CD4-positive, alpha-beta memory T cell (primary cell): ENCODE measurements at regions of chr2 and their contacts with region 1.

Region 1: DNA sequence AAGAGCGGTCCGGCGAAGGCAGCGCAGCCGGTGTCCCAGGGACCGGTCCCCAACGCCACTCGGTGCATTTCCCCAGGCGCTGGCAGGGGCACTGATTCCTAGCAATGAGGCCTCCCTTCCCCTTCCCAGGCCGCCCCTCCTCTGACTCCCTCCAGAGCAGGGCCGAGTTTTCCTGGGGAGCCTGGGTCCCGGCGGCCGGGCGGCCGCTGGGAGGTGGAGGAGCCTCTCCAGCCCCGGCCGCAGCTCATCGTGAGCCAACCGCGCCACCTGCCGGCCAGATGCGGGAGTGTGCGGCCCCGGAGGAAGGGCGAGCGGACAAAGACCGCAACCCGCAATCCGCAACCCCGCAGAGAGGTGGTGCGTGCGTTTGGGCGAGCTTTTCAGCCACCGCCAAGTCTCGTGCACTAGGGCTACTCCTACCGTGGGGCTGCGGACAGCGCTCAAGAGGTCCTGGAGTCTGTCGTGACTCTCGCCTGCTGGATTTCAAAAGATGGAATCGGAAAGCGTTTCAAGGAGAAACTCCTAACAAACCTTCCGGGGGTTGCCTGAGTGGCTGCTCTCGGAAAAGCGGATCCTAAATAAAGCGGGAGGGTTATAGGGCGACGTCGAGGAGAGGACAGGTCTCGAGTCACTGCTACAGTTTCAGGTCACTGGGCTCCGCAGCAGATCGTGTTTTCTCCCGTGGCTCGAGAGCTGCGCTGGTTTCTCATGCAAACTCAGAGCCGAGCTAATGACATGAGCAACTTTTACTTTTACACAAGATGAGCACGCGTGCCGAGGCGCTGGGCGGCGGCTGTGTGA is 1.5 kb upstream of the EPHA4 start:
- DNase-seq: peak; percentile 73 to 84 (median 74)
- H3K4me3 ChIP-seq: peak overlapping the region; percentile 69 to 90
- H3K4me3 Mint-ChIP-seq: peak overlapping the region; percentile 77 to 93 (median 86)
- H3K27ac ChIP-seq: peak overlapping the region; percentile 79
- H3K27ac Mint-ChIP-seq: peak overlapping the region in 6 of 7 donors; percentile 24 to 93 (median 74)
- H3K4me1 ChIP-seq: peaks cover 32% of the 10 kb centered on the region
- H3K4me1 Mint-ChIP-seq: peaks cover 23 to 40% (median 31%) of the 10 kb centered on the region in 4 donors
- H3K27me3 ChIP-seq: peaks cover 6% of the 10 kb centered on the region
- H3K27me3 Mint-ChIP-seq: peaks cover 24 to 31% of the 10 kb centered on the region in 2 donors

Region 2: DNA sequence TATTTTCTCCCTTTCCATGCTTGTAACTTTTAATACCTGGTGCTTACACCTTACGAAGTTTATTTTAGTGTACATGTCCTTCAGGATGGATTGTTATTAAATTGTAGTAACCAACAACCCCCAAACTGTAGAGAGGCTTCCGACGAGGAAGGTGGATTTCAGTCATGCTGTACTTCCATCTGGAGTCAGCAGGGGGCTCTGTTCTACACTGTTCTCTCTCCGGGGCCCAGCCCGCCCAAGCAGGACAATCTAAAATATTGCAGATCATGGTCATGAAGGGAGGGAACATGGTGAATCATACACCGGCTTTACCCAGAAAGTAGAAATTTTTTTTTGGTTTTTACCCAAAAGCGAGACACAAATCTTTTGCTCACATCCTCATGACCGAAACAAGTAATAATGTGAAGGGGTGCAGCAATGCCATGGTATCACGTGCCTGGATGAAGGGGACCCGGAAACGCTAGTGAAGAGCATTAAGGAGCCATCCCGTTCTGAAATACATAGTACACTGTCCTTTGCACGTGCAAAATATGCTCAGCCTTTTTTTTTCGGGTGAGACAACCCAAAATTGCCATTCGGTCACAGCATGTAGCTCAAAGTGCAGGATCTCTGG is 886.3 kb before region 1 on chr2:
- CTCF ChIA-PET with region 1: interaction called, 35 read pairs
- POLR2A ChIA-PET with region 1: no interaction called
- intact Hi-C with region 1: loop called (anchors 1 kb)
- DNase-seq: peak; percentile 47 to 57 (median 54)
- H3K4me3 ChIP-seq: no peak overlapping the region
- H3K4me3 Mint-ChIP-seq: no peak overlapping the region
- H3K27ac ChIP-seq: no peak overlapping the region
- H3K27ac Mint-ChIP-seq: peak overlapping the region in 1 of 7 donors; percentile 60
- H3K4me1 ChIP-seq: no peaks in the 10 kb centered on the region
- H3K4me1 Mint-ChIP-seq: no peaks in the 10 kb centered on the region
- H3K27me3 ChIP-seq: no peaks in the 10 kb centered on the region
- H3K27me3 Mint-ChIP-seq: peaks cover 2 to 12% of the 10 kb centered on the region in 2 donors

Region 3: DNA sequence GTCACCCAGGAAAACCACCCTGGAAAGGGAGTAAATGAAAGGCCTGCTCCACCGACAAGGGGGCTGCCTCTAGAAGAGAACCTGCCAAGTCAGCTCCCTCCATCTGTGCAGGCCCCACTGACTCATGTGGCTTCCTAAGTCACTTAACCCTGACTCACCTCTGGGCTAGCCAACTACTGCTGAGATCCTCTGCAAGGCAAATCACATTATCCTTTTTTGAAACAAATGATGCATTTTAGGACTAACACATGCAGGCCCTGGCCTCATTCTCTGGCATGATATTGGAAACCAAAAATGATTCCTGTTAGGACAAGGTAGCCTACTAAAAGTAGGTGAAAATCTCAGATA is 476.1 kb before region 1 on chr2:
- CTCF ChIA-PET with region 1: no interaction called
- POLR2A ChIA-PET with region 1: no interaction called
- intact Hi-C with region 1: loop called (anchors 5 kb)
- DNase-seq: no peak
- H3K4me3 ChIP-seq: no peak overlapping the region
- H3K4me3 Mint-ChIP-seq: no peak overlapping the region
- H3K27ac ChIP-seq: no peak overlapping the region
- H3K27ac Mint-ChIP-seq: no peak overlapping the region
- H3K4me1 ChIP-seq: no peaks in the 10 kb centered on the region
- H3K4me1 Mint-ChIP-seq: no peaks in the 10 kb centered on the region
- H3K27me3 ChIP-seq: no peaks in the 10 kb centered on the region
- H3K27me3 Mint-ChIP-seq: peaks cover 0 to 4% of the 10 kb centered on the region in 2 donors

Region 4: GRCh38 chr2:221423210-221423786 is 150.3 kb before region 1 on chr2:
- CTCF ChIA-PET with region 1: interaction called, 10 read pairs
- POLR2A ChIA-PET with region 1: interaction called, 6 read pairs
- intact Hi-C with region 1: loop called (anchors 5 kb)
- DNase-seq: no peak
- H3K4me3 ChIP-seq: no peak overlapping the region
- H3K4me3 Mint-ChIP-seq: no peak overlapping the region
- H3K27ac ChIP-seq: no peak overlapping the region
- H3K27ac Mint-ChIP-seq: peak overlapping the region in 2 of 7 donors; percentile 70 to 79
- H3K4me1 ChIP-seq: peaks cover 29% of the 10 kb centered on the region
- H3K4me1 Mint-ChIP-seq: peaks cover 21 to 50% (median 37%) of the 10 kb centered on the region in 4 donors
- H3K27me3 ChIP-seq: no peaks in the 10 kb centered on the region
- H3K27me3 Mint-ChIP-seq: no peaks in the 10 kb centered on the region

Region 5: DNA sequence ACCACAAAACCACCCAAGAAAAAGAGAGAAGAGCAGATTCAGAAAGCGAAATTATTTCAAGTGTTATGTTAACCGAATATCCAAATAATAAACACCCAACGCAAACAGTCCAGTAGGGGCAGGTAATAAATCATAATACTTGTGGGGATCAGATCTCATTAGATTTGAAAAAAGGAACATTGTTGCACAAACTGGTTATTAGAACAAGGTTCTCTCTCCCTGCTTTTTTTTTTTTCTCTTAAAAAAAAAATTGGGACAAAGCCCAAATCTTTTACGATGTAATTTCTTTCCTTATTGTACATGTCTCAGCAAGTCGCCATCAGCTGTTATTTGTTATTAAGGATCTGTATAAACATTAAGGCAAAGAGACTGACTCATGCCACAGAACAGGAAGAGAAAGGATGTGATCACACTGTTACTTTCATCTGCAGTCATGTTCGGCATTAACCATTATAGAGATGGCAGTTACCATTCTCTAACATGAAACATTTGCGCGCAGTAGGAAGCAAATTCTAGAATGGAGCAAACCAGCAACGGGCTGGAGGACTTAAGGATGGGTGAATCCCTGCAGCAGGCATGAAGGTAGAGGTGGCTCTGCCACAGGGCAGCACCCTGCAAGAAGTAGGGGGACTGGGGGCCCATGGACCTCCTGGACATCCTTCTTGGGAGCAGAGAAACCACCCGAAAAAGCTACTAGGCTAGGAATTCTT is 43.5 kb before region 1 on chr2:
- CTCF ChIA-PET with region 1: interaction called, 13 read pairs
- POLR2A ChIA-PET with region 1: interaction called, 13 read pairs
- intact Hi-C with region 1: loop called (anchors 2 kb)
- DNase-seq: peak in 4 of 5 donors; percentile 26 to 40 (median 36)
- H3K4me3 ChIP-seq: peak overlapping the region; percentile 9 to 38
- H3K4me3 Mint-ChIP-seq: peak overlapping the region; percentile 66 to 83 (median 78)
- H3K27ac ChIP-seq: peak overlapping the region; percentile 33
- H3K27ac Mint-ChIP-seq: peak overlapping the region; percentile 84 to 96 (median 91)
- H3K4me1 ChIP-seq: peaks cover 69% of the 10 kb centered on the region
- H3K4me1 Mint-ChIP-seq: peaks cover 54 to 76% (median 68%) of the 10 kb centered on the region in 4 donors
- H3K27me3 ChIP-seq: no peaks in the 10 kb centered on the region
- H3K27me3 Mint-ChIP-seq: no peaks in the 10 kb centered on the region